Colonic mucosa (tissue), 4 donors: ENCODE measurements at regions of chr6 and their contacts with region 1.

Region 1: DNA sequence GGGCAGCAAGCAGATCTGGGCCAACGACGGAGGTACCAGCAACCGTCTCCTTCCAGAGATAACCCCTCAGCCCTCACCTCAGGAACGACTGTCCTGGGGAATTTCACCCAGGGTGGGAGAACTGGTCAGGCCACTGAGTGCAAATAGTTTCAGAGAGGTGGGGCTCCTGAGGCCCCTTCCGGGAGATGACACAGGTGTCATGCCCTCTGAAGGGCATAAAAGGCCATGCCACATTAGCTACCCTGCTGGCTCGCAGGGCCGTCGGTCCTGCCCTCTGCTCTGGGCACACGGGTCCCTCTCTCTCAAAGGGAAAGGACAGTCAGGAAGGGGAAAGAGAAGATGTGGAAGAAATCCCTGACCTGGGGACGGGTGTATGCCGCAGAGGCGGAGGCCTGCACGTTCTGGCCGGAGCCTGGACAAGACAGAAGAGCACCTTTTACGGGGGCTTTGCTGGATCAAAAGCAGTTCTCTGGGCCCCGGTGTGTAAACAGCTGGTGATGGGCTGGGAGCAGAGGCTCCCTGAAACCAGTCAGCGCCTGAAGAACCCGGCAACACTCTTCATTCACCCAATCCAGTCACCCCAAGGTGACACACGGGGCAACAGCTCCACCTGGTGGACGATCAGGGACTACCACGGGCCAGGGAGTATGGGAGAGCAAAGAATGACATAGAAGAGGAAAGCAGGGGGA is 6.4 kb upstream of the TAF8 start:
- DNase-seq: peak; percentile 95
- H3K4me3 ChIP-seq: no peak overlapping the region
- H3K27ac ChIP-seq: no peak overlapping the region
- H3K4me1 ChIP-seq: peaks cover 19% of the 10 kb centered on the region
- H3K27me3 ChIP-seq: no peaks in the 10 kb centered on the region
- CTCF ChIP-seq: peak; percentile 97

Region 2: GRCh38 chr6:41846666-41847237 is 197.2 kb before region 1 on chr6:
- intact Hi-C with region 1: loop called (anchors 1 kb)
- DNase-seq: peak; percentile 72
- H3K4me3 ChIP-seq: no peak overlapping the region
- H3K27ac ChIP-seq: no peak overlapping the region
- H3K4me1 ChIP-seq: no peaks in the 10 kb centered on the region
- H3K27me3 ChIP-seq: no peaks in the 10 kb centered on the region
- CTCF ChIP-seq: peak; percentile 84

Region 3: DNA sequence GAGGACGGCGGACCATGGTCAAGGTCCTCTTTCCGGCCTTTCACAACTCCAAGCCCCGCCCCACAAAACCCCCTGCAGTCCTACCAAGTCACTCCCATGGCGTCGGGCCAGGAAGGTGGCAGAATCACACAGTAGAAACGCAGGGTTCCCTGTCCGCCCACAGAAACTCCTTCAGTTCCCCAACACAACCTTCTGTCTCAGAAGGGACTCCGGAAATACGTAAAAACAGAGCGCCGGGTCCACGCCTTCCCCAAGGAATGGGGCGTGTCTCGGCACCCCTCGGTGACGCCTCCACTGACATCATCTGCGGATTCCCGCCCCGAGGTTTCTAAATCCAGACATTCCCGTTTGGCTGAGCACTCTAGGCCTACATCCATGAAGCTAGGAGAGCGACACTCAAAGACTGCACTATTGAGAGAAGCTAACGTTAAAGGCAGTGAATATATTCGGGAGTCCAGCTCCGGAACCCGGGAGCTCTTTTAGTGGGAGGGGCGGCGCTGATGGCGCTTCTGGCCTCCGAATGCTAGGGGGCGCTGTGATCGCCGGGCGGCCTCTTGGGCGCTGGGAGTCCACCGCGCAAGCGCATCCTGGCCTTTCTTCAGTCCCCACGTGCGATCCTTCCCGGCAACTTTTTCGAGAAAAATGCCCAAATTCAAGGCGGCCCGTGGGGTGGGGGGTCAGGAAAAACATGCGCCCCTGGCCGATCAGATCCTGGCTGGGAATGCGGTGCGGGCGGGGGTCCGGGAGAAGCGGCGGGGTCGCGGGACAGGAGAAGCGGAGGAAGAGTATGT is 122.8 kb before region 1 on chr6 and contains the starts of genes BYSL and MED20:
- intact Hi-C with region 1: loop called (anchors 5 kb)
- DNase-seq: peak; percentile 96
- H3K4me3 ChIP-seq: peak within 1 kb of the TSS; percentile 76
- H3K27ac ChIP-seq: peak within 1 kb of the TSS; percentile 93
- H3K4me1 ChIP-seq: peaks cover 4% of the 10 kb centered on the region
- H3K27me3 ChIP-seq: no peaks in the 10 kb centered on the region
- CTCF ChIP-seq: peak; percentile 99
- total RNA-seq, gene BYSL: 10.4 to 16.4 TPM
- total RNA-seq, gene MED20: 15.0 to 22.9 TPM

Region 4: GRCh38 chr6:41936073-41936837 is 107.7 kb before region 1 on chr6:
- intact Hi-C with region 1: loop called (anchors 5 kb)
- DNase-seq: peak; percentile 72
- H3K4me3 ChIP-seq: no peak overlapping the region
- H3K27ac ChIP-seq: no peak overlapping the region
- H3K4me1 ChIP-seq: peaks cover 18% of the 10 kb centered on the region
- H3K27me3 ChIP-seq: no peaks in the 10 kb centered on the region
- CTCF ChIP-seq: peak; percentile 70

Region 5: DNA sequence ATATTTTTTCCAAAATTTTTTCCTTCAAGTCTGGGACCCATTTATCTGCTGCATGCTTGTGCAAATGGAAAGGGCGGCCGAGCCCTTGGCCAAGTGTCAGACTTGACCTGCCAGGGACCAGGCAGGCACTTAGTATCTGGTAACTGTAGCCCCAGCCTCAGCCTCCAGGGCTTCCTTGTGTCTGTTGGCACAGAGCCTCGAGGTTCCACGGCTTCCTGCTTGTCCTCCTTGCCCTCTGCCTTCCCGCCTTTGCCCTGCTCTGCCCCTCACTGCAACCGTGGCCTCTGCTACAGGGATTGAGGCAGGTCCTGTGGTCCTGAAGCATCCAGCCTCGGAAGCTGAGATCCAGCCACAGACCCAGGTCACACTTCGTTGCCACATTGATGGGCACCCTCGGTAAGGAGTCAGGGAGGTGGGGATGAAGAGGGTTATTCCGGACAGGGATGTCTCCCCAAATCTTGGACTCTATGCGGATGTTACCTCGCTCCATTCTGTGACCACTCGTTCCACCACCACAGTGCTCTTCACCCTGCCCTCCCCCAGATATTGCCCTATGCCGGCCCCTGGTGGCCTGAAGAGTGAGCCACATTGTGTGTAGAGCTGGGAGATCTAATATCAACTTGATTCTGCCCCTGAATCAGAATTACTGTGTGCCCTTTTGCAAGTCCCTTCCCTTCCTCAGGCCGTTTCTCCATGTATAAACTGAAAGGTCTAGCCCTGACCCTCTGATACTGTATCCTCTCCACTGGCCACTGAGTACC is 1085.7 kb after region 1 on chr6:
- intact Hi-C with region 1: no loop called
- DNase-seq: peak; percentile 46
- H3K4me3 ChIP-seq: no peak overlapping the region
- H3K27ac ChIP-seq: no peak overlapping the region
- H3K4me1 ChIP-seq: no peaks in the 10 kb centered on the region
- H3K27me3 ChIP-seq: no peaks in the 10 kb centered on the region
- CTCF ChIP-seq: peak; percentile 34